ENCODE measurements at regions of chr7 and their contacts with region 1.

Region 1: DNA sequence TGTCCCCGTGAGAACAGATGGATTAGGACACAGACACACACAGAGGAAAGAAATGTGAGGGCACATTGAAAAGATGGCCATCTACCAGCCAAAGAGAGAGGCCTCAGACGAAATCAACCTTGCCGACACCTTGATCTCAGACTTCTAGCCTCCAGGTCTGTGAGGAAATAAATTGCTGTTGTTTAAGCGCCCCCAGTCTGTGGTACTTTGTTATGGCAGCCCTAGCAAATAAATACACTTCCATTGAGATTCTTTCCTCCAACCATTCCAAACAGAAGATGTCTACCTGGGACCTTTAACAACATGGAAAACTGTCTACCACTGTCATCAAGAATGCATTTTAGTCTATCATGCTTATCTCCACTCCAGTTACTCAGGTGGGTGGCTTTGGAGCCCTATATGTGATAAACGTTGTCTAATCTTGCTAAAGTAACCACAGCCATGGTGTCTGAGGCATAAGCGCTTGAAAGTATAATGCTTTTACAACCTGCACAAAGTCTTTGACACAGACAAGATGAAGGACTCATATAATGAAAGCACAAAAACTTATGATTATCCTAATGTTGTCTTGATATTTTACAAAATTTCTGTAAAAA is 244.3 kb downstream of the MTERF1 start:
- DNase-seq: peak; percentile 32
- ATAC-seq: peak; percentile 84
- H3K4me3 ChIP-seq: no peak overlapping the region
- H3K27ac ChIP-seq: no peak overlapping the region
- H3K4me1 ChIP-seq: no peaks in the 10 kb centered on the region
- H3K27me3 ChIP-seq: no peaks in the 10 kb centered on the region
- CTCF ChIP-seq: peak; percentile 57 to 72 (median 66)
- POLR2A ChIP-seq: no peak
- RAD21 ChIP-seq: peak; percentile 82

Region 2: GRCh38 chr7:91089382-91089963 is 546.8 kb before region 1 on chr7:
- CTCF ChIA-PET with region 1: no interaction called
- POLR2A ChIA-PET with region 1: no interaction called
- RAD21 ChIA-PET with region 1: no interaction called
- intact Hi-C with region 1: loop called (anchors 5 kb)
- DNase-seq: peak; percentile 26
- ATAC-seq: peak; percentile 82
- H3K4me3 ChIP-seq: no peak overlapping the region
- H3K27ac ChIP-seq: no peak overlapping the region
- H3K4me1 ChIP-seq: no peaks in the 10 kb centered on the region
- H3K27me3 ChIP-seq: no peaks in the 10 kb centered on the region
- CTCF ChIP-seq: peak; percentile 47 to 84 (median 82); a peak in 5 of 6 replicates
- POLR2A ChIP-seq: no peak
- RAD21 ChIP-seq: peak; percentile 69

Region 3: GRCh38 chr7:91288208-91288824 is 347.9 kb before region 1 on chr7:
- CTCF ChIA-PET with region 1: interaction called, 6 read pairs
- POLR2A ChIA-PET with region 1: no interaction called
- RAD21 ChIA-PET with region 1: no interaction called
- intact Hi-C with region 1: loop called (anchors 5 kb)
- DNase-seq: peak; percentile 27
- ATAC-seq: peak; percentile 84
- H3K4me3 ChIP-seq: no peak overlapping the region
- H3K27ac ChIP-seq: no peak overlapping the region
- H3K4me1 ChIP-seq: no peaks in the 10 kb centered on the region
- H3K27me3 ChIP-seq: peaks cover 7% of the 10 kb centered on the region; the same call in 1 of the 2 replicates
- CTCF ChIP-seq: peak; percentile 27 to 69 (median 55); a peak in 5 of 6 replicates
- POLR2A ChIP-seq: no peak
- RAD21 ChIP-seq: peak; percentile 56

Region 4: GRCh38 chr7:91722831-91723230 is 86.6 kb after region 1 on chr7:
- CTCF ChIA-PET with region 1: no interaction called
- POLR2A ChIA-PET with region 1: no interaction called
- RAD21 ChIA-PET with region 1: no interaction called
- intact Hi-C with region 1: no loop called
- DNase-seq: no peak
- ATAC-seq: no peak
- H3K4me3 ChIP-seq: no peak overlapping the region
- H3K27ac ChIP-seq: no peak overlapping the region
- H3K4me1 ChIP-seq: peaks cover 0 to 4% of the 10 kb centered on the region in 2 experiments; a peak in 1 of 4 replicates
- H3K27me3 ChIP-seq: no peaks in the 10 kb centered on the region
- CTCF ChIP-seq: no peak
- POLR2A ChIP-seq: no peak
- RAD21 ChIP-seq: no peak

Measured in HCT116 (cell line).